ENCODE measurements at regions of chr2 and their contacts with region 1.

Region 1: DNA sequence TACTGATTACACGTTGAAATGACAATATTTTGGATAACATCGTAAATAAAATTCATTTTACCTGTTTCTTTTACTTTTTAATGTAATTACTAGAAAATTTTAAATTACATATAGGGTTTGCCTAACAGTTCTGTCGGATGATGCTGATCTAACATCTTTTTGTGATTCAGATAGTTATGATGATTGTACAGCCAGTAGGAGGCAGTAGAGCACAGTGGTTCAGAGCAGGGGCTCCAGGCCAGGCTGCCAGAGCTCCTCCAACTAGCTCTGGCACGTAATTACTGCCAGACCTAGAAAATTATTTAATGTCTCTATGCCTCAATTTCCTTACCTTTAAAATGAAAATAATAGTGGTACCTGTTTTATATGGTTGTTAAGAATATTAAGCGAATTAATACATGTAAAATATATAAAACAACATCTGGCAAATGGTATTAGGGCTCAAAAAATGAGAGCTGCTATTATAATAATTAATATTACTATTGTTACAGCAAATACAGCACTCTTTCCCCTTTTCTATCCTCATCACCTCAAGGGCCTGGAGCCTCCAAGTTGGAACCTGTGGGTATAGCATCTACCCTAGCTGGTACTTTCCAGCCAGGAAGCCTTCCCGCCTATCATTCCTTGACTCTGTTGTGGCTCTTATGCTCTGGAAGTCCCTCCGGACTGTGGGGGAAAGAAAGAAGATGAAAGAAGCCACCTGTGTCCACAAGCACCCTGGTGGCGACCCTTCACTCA is 47.7 kb upstream of the PLA2R1 start:
- DNase-seq: peak; percentile 63 to 85 (median 77)
- H3K4me3 ChIP-seq: no peak overlapping the region
- H3K27ac ChIP-seq: no peak overlapping the region
- H3K4me1 ChIP-seq: no peaks in the 10 kb centered on the region
- H3K27me3 ChIP-seq: no peaks in the 10 kb centered on the region

Region 2: DNA sequence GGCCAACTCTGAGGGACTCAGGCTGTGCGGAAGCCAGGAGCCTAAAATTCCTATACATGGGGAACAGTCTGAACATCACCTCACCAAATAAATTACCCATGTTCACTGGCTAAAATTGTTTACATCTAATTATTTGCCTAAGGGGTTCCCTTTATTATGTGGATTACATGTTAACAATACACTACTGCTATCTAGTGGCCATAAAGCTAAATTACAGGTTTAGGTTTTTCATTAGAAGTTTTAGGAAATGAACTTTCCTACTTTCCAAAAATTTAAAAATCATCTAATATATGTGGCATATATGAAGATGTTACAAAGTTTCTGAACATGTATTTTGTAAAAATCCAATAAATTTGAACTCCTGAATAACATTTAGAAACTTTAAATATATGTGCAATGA is 87.9 kb before region 1 on chr2:
- CTCF ChIA-PET with region 1: no interaction called
- POLR2A ChIA-PET with region 1: no interaction called
- DNase-seq: peak in 2 of 3 donors; percentile 9 to 15
- H3K4me3 ChIP-seq: no peak overlapping the region
- H3K27ac ChIP-seq: no peak overlapping the region
- H3K4me1 ChIP-seq: no peaks in the 10 kb centered on the region
- H3K27me3 ChIP-seq: no peaks in the 10 kb centered on the region

Region 3: GRCh38 chr2:160097326-160097725 is 12.8 kb before region 1 on chr2:
- CTCF ChIA-PET with region 1: interaction called, 12 read pairs
- POLR2A ChIA-PET with region 1: no interaction called
- DNase-seq: no peak
- H3K4me3 ChIP-seq: no peak overlapping the region
- H3K27ac ChIP-seq: no peak overlapping the region
- H3K4me1 ChIP-seq: no peaks in the 10 kb centered on the region
- H3K27me3 ChIP-seq: no peaks in the 10 kb centered on the region

Region 4: DNA sequence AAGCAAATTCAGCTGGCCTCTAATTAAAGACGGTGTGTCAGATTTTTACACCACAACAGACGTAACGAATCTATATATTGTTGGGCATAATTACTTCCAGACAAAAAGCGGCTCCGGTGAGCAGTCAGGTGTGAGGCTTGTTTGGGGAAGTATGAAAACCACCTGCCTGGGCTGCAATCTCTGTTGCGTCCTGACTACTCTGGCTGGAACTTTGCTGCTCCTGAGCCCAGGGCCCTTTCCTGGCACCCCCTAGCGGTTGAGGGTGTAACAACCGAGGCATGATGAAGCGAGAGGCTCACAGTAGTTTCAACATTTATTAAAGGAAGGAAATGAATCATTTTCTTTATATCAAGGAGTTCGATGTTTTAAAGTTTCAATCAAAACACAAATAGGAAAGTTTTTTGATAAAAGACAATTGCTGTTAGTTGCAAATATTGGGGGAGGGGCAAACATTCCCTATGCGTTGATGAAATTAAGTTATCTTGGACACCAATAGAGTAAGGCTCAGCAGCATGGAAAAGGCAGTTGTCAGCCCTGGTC is 100.6 kb after region 1 on chr2:
- CTCF ChIA-PET with region 1: interaction called, 27 read pairs
- POLR2A ChIA-PET with region 1: no interaction called
- DNase-seq: peak; percentile 81 to 92 (median 92)
- H3K4me3 ChIP-seq: no peak overlapping the region
- H3K27ac ChIP-seq: no peak overlapping the region
- H3K4me1 ChIP-seq: peaks cover 0 to 6% (median 2%) of the 10 kb centered on the region in 4 experiments
- H3K27me3 ChIP-seq: peaks cover 0 to 3% (median 0%) of the 10 kb centered on the region in 5 experiments

Measured in common myeloid progenitor, CD34-positive (primary cell).